ENCODE measurements at regions of chr1 and their contacts with region 1.

Region 1: GRCh38 chr1:193537266-193538002 is 351.0 kb upstream of the B3GALT2 start:
- DNase-seq: peak; percentile 84
- ATAC-seq: peak; percentile 89
- H3K4me3 Mint-ChIP-seq: no peak overlapping the region
- H3K27ac Mint-ChIP-seq: peak overlapping the region; percentile 53
- H3K4me1 Mint-ChIP-seq: peaks cover 47% of the 10 kb centered on the region
- H3K27me3 Mint-ChIP-seq: no peaks in the 10 kb centered on the region

Region 2: GRCh38 chr1:193059268-193060225 is 477.9 kb before region 1 on chr1 and contains the starts of genes RO60 and UCHL5:
- CTCF ChIA-PET with region 1: no interaction called
- POLR2A ChIA-PET with region 1: no interaction called
- intact Hi-C with region 1: loop called in 1 of 2 experiments (anchors 10 kb)
- DNase-seq: peak; percentile 97
- ATAC-seq: peak; percentile 94
- H3K4me3 Mint-ChIP-seq: peak within 1 kb of the TSS; percentile 90
- H3K27ac Mint-ChIP-seq: peak within 1 kb of the TSS; percentile 99
- H3K4me1 Mint-ChIP-seq: peaks cover 50% of the 10 kb centered on the region
- H3K27me3 Mint-ChIP-seq: no peaks in the 10 kb centered on the region
- total RNA-seq, gene RO60: 45.4 to 57.3 TPM
- total RNA-seq, gene UCHL5: 94.5 to 141 TPM

Region 3: GRCh38 chr1:193211539-193211938 is 325.9 kb before region 1 on chr1:
- CTCF ChIA-PET with region 1: no interaction called
- POLR2A ChIA-PET with region 1: no interaction called
- intact Hi-C with region 1: no loop called
- DNase-seq: no peak
- ATAC-seq: peak; percentile 69
- H3K4me3 Mint-ChIP-seq: no peak overlapping the region
- H3K27ac Mint-ChIP-seq: no peak overlapping the region
- H3K4me1 Mint-ChIP-seq: peaks cover 15% of the 10 kb centered on the region
- H3K27me3 Mint-ChIP-seq: no peaks in the 10 kb centered on the region

Region 4: GRCh38 chr1:193417945-193418744 is 119.3 kb before region 1 on chr1:
- CTCF ChIA-PET with region 1: no interaction called
- POLR2A ChIA-PET with region 1: no interaction called
- intact Hi-C with region 1: loop called (anchors 2 kb)
- DNase-seq: no peak
- ATAC-seq: peak; percentile 94
- H3K4me3 Mint-ChIP-seq: peak overlapping the region; percentile 59
- H3K27ac Mint-ChIP-seq: peak overlapping the region; percentile 68
- H3K4me1 Mint-ChIP-seq: peaks cover 43% of the 10 kb centered on the region
- H3K27me3 Mint-ChIP-seq: no peaks in the 10 kb centered on the region

Region 5: DNA sequence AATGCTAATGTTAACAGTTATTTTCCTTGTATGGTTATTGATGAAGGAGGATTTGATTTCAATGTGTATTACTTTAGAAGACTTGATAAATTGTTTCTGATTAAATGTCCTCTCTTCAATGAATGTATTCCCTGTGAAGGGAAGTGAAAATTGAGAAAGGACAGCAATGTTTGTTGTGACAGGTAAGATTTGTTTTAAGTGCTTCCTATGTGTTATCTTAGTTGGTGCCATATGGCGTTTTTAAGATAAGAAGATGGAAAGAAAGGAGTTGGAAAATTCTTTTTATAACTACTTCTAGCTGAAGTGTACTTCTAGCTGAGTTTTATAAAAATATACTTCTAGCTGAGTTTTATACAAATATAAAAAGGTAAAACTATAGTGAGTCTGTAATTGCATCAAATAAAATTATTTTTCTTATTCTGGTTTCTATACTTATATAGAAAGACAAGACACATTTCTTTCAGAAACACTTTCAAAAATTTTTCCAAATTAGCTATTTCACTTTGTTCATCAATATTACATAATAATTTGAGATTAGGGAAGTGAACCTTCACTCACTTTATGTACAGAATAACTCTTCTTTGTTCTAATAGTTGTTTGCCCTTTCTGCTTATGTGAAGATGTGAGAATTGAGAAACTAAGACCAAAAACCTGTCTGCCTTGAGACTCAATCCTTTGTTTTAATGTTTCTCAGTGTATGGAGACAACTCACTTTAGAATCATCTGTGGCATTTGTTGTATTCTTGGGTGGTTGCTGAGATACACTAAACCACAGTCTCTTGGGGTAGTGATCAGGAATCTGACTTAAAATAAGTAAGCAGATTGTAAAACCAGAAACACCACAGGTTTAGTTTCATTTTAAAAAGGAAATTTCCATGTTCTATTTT is 31.9 kb after region 1 on chr1:
- CTCF ChIA-PET with region 1: no interaction called
- POLR2A ChIA-PET with region 1: no interaction called
- intact Hi-C with region 1: loop called (anchors 1 kb)
- DNase-seq: no peak
- ATAC-seq: peak; percentile 92
- H3K4me3 Mint-ChIP-seq: no peak overlapping the region
- H3K27ac Mint-ChIP-seq: peak overlapping the region; percentile 79
- H3K4me1 Mint-ChIP-seq: peaks cover 27% of the 10 kb centered on the region
- H3K27me3 Mint-ChIP-seq: no peaks in the 10 kb centered on the region

Region 6: DNA sequence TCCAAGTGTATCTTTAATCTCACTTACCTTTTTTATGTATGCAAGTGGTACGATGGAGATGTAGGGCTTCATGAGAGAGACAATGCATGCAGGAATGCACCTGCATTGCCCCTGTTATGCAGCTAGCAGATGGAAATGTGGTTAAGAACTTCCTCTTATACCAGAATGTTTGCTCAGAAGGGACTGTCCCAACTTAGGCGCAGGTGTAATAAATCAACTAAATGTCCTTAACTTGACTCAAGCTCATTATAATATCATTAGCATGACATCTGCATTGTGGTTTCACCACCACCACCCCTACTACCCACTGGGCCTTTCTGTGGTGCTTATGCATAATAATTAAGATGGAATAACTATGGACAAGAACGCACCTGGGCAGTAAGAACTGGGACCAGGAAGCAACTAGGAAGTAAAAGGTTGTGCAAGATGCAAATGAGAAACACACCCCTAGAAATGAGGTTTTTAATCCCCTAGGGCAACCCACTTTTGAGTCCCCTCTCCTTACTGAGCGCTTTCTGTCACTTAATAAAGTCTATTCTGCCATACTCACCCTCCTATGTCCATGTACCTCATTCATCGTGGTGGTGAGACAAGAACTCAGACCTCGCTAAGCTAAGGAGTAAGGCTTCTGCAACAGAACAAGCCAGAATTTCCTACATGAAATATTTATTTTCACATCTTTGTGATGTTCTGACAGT is 752.3 kb after region 1 on chr1:
- CTCF ChIA-PET with region 1: no interaction called
- POLR2A ChIA-PET with region 1: no interaction called
- intact Hi-C with region 1: loop called in 1 of 2 experiments (anchors 1 kb)
- DNase-seq: peak; percentile 66
- ATAC-seq: peak; percentile 93
- H3K4me3 Mint-ChIP-seq: peak overlapping the region; percentile 36
- H3K27ac Mint-ChIP-seq: no peak overlapping the region
- H3K4me1 Mint-ChIP-seq: peaks cover 32% of the 10 kb centered on the region
- H3K27me3 Mint-ChIP-seq: no peaks in the 10 kb centered on the region